ENCODE measurements at regions of chr3 and their contacts with region 1.

Region 1: DNA sequence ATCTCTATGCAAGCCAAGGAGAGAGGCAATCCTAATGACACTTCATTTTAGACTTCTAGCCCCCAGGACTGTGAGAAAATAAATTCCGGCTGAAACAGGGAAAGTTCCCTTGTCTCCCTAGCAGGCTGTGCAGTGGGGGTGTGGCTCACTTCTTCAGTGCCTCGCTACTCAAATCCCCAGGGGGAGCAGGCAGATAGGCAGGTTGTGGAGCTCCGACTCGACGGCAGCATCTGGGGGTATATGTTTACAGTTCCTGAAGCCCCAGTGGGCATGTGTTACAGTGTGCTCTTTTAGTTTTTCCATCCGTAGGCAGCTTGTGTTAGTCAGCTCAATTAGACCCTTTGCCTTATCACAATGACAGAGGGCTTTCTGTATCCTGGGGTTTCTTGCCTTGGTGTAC is 836.5 kb downstream of the PDCD6IP start:
- DNase-seq: no peak
- ATAC-seq: no peak

Region 2: GRCh38 chr3:34599581-34599980 is 35.4 kb before region 1 on chr3:
- intact Hi-C with region 1: loop called (anchors 2 kb)
- DNase-seq: no peak
- ATAC-seq: no peak